MCF 10A (cell line): ENCODE measurements at regions of chr20 and their contacts with region 1.

Region 1: GRCh38 chr20:10864076-10864918 is 190.5 kb upstream of the JAG1 start:
- DNase-seq: peak; percentile 45
- H3K4me3 Mint-ChIP-seq: peak overlapping the region; percentile 54
- H3K27ac Mint-ChIP-seq: peak overlapping the region; percentile 91
- H3K4me1 Mint-ChIP-seq: peaks cover 56% of the 10 kb centered on the region
- H3K27me3 Mint-ChIP-seq: no peaks in the 10 kb centered on the region
- CTCF ChIP-seq: no peak

Region 2: GRCh38 chr20:10708351-10709185 is 155.7 kb before region 1 on chr20:
- CTCF ChIA-PET with region 1: no interaction called
- POLR2A ChIA-PET with region 1: interaction called, 3 read pairs
- intact Hi-C with region 1: loop called (anchors 10 kb)
- DNase-seq: peak; percentile 38
- H3K4me3 Mint-ChIP-seq: no peak overlapping the region
- H3K27ac Mint-ChIP-seq: no peak overlapping the region
- H3K4me1 Mint-ChIP-seq: peaks cover 20% of the 10 kb centered on the region
- H3K27me3 Mint-ChIP-seq: no peaks in the 10 kb centered on the region
- CTCF ChIP-seq: no peak

Region 3: GRCh38 chr20:10848810-10849370 is 15.4 kb before region 1 on chr20:
- CTCF ChIA-PET with region 1: interaction called, 8 read pairs
- POLR2A ChIA-PET with region 1: interaction called, 50 read pairs
- intact Hi-C with region 1: no loop called
- DNase-seq: peak; percentile 87
- H3K4me3 Mint-ChIP-seq: no peak overlapping the region
- H3K27ac Mint-ChIP-seq: peak overlapping the region; percentile 89
- H3K4me1 Mint-ChIP-seq: peaks cover 15% of the 10 kb centered on the region
- H3K27me3 Mint-ChIP-seq: no peaks in the 10 kb centered on the region
- CTCF ChIP-seq: no peak

Region 4: GRCh38 chr20:10902576-10903282 is 38.4 kb after region 1 on chr20:
- CTCF ChIA-PET with region 1: no interaction called
- POLR2A ChIA-PET with region 1: no interaction called
- intact Hi-C with region 1: no loop called
- DNase-seq: no peak
- H3K4me3 Mint-ChIP-seq: no peak overlapping the region
- H3K27ac Mint-ChIP-seq: no peak overlapping the region
- H3K4me1 Mint-ChIP-seq: peaks cover 6% of the 10 kb centered on the region
- H3K27me3 Mint-ChIP-seq: no peaks in the 10 kb centered on the region
- CTCF ChIP-seq: no peak

Region 5: GRCh38 chr20:10954137-10954840 is 90.0 kb after region 1 on chr20:
- CTCF ChIA-PET with region 1: no interaction called
- POLR2A ChIA-PET with region 1: interaction called, 11 read pairs
- intact Hi-C with region 1: no loop called
- DNase-seq: peak; percentile 92
- H3K4me3 Mint-ChIP-seq: no peak overlapping the region
- H3K27ac Mint-ChIP-seq: peak overlapping the region; percentile 91
- H3K4me1 Mint-ChIP-seq: peaks cover 19% of the 10 kb centered on the region
- H3K27me3 Mint-ChIP-seq: no peaks in the 10 kb centered on the region
- CTCF ChIP-seq: no peak

Region 6: DNA sequence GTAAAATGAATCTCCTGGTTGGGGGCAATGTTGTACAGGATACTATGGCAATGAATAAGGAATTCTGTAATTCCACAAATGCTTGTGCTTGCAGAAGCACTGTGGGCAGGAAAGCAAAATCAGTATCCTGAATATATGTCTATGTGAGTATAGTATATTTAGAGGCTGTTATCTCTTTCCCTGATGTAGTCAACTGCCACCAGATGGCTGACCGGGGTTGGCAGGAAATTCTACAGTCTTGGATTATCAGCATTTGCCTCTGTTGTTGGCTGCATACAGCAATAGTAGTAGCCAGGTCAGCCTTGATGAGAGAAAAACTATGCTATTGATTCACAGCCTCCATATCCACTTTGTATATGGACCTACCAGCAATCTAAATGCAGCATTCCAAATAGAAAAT is 234.6 kb after region 1 on chr20:
- CTCF ChIA-PET with region 1: no interaction called
- POLR2A ChIA-PET with region 1: no interaction called
- intact Hi-C with region 1: loop called (anchors 10 kb)
- DNase-seq: peak; percentile 25
- H3K4me3 Mint-ChIP-seq: no peak overlapping the region
- H3K27ac Mint-ChIP-seq: no peak overlapping the region
- H3K4me1 Mint-ChIP-seq: no peaks in the 10 kb centered on the region
- H3K27me3 Mint-ChIP-seq: no peaks in the 10 kb centered on the region
- CTCF ChIP-seq: peak; percentile 11

Region 7: GRCh38 chr20:11274141-11274594 is 409.9 kb after region 1 on chr20:
- CTCF ChIA-PET with region 1: no interaction called
- POLR2A ChIA-PET with region 1: no interaction called
- intact Hi-C with region 1: loop called (anchors 5 kb)
- DNase-seq: peak; percentile 78
- H3K4me3 Mint-ChIP-seq: no peak overlapping the region
- H3K27ac Mint-ChIP-seq: peak overlapping the region; percentile 29
- H3K4me1 Mint-ChIP-seq: peaks cover 6% of the 10 kb centered on the region
- H3K27me3 Mint-ChIP-seq: no peaks in the 10 kb centered on the region
- CTCF ChIP-seq: peak; percentile 59